ENCODE measurements at regions of chr5 and their contacts with region 1.

Region 1: GRCh38 chr5:57221049-57221568 is 47.2 kb downstream of the GPBP1 start:
- DNase-seq: no peak
- H3K4me3 ChIP-seq: no peak overlapping the region
- H3K27ac ChIP-seq: peak overlapping the region in 1 of 4 donors; percentile 17
- H3K4me1 ChIP-seq: peaks cover 0 to 10% (median 5%) of the 10 kb centered on the region in 4 donors
- H3K27me3 ChIP-seq: no peaks in the 10 kb centered on the region
- CTCF ChIP-seq: peak; percentile 77 to 94 (median 86)
- EP300 ChIP-seq: no peak
- POLR2A ChIP-seq: no peak

Region 2: DNA sequence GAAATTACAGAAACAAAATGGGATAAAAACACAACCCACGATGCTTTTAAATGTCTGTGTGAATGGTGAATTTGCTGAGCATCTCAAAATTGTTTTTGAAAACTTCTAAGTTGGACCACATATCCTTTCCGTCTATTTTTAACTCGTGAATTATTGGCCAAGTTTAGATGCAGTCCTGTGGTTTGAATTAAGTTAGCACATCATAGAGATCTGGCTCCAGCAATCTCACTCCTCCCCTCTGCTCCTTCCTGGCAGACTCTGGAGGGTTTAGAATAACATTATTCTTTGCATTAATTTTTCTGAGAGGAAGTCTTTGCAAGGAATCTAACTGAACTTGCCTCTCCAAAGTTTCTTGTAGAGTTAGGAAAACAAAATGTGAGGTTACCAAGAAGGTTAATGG is 973.5 kb before region 1 on chr5:
- intact Hi-C with region 1: no loop called
- DNase-seq: no peak
- H3K4me3 ChIP-seq: no peak overlapping the region
- H3K27ac ChIP-seq: no peak overlapping the region
- H3K4me1 ChIP-seq: no peaks in the 10 kb centered on the region
- H3K27me3 ChIP-seq: no peaks in the 10 kb centered on the region
- CTCF ChIP-seq: no peak
- EP300 ChIP-seq: no peak
- POLR2A ChIP-seq: no peak

Region 3: DNA sequence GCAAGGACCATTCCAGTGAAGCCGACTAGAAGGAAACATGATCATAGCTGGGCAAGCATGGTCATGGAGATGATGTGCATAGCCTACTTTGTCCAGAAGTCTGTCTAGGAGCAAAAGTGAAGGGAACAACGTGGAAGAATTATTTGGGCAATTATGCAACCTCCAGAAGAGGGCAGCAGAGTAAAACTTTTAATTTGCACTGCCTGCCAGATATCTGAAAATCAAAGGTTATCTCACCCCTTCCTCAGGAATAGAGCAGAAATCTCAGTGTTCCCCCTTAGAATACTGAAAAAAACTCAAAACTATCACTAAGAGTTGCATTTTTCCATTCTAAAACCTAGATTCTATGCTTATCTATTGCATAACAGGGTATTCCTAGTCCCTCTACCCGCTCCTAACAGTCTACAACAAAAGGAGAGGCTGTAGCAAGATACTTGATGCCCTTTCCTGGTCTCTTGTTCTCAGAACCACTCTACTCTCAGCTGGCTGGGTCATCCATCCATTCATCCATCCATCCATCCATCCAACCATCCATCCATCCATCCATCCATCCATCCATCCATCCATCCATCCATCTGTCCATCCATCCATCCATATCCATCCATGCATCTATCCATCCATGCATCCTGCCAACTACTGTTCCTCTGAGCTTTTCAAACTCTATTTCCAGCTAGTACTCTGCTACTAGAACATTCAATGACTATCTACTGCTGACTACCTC is 320.1 kb before region 1 on chr5:
- intact Hi-C with region 1: loop called (anchors 2 kb)
- DNase-seq: no peak
- H3K4me3 ChIP-seq: no peak overlapping the region
- H3K27ac ChIP-seq: no peak overlapping the region
- H3K4me1 ChIP-seq: no peaks in the 10 kb centered on the region
- H3K27me3 ChIP-seq: no peaks in the 10 kb centered on the region
- CTCF ChIP-seq: peak; percentile 54 to 64 (median 60)
- EP300 ChIP-seq: no peak
- POLR2A ChIP-seq: no peak

Region 4: GRCh38 chr5:56909294-56910209 is 311.6 kb before region 1 on chr5 and contains the start of gene SETD9:
- intact Hi-C with region 1: loop called (anchors 2 kb)
- DNase-seq: peak; percentile 99
- H3K4me3 ChIP-seq: peak within 1 kb of the TSS; percentile 54 to 73 (median 69)
- H3K27ac ChIP-seq: peak within 1 kb of the TSS; percentile 90 to 98 (median 96)
- H3K4me1 ChIP-seq: peaks cover 0 to 9% (median 7%) of the 10 kb centered on the region in 4 donors
- H3K27me3 ChIP-seq: no peaks in the 10 kb centered on the region
- CTCF ChIP-seq: no peak
- EP300 ChIP-seq: no peak
- POLR2A ChIP-seq: peak; percentile 68 to 69
- total RNA-seq, gene SETD9: 6.6 to 30.7 (median 19.4) TPM

Region 5: GRCh38 chr5:56951946-56952691 is 269.0 kb before region 1 on chr5 and contains the start of gene MIER3:
- intact Hi-C with region 1: loop called (anchors 2 kb)
- DNase-seq: peak; percentile 88
- H3K4me3 ChIP-seq: peak within 1 kb of the TSS; percentile 70 to 95 (median 93)
- H3K27ac ChIP-seq: peak within 1 kb of the TSS; percentile 87 to 95 (median 92)
- H3K4me1 ChIP-seq: peaks cover 0 to 21% (median 16%) of the 10 kb centered on the region in 4 donors
- H3K27me3 ChIP-seq: no peaks in the 10 kb centered on the region
- CTCF ChIP-seq: no peak
- EP300 ChIP-seq: no peak
- POLR2A ChIP-seq: no peak
- total RNA-seq, gene MIER3: 12.5 to 46.4 (median 21.7) TPM

Region 6: DNA sequence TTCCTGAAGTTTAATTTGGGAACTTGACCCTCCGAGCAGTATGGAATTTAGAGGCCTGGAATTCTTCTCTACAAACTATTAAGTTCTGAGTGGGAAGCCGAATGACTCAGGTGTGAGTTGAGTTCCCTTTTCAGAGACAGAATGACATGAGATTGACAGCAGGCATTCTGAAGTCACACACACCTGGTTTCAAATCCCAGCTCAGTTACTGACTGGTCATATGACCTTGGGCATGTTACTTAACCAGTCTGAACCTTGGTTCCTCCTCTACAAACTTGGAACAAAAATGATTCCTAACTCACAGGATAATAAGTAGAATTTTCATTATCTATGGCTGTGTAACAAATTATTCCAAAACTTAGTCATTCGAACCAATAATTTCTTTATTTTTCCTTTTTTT is 92.8 kb before region 1 on chr5:
- intact Hi-C with region 1: no loop called
- DNase-seq: no peak
- H3K4me3 ChIP-seq: no peak overlapping the region
- H3K27ac ChIP-seq: no peak overlapping the region
- H3K4me1 ChIP-seq: no peaks in the 10 kb centered on the region
- H3K27me3 ChIP-seq: no peaks in the 10 kb centered on the region
- CTCF ChIP-seq: no peak
- EP300 ChIP-seq: no peak
- POLR2A ChIP-seq: no peak